ENCODE measurements at regions of chrX and their contacts with region 1.

Region 1: GRCh38 chrX:48801280-48802088 is at the start of gene HDAC6:
- DNase-seq: peak; percentile 96
- H3K4me3 Mint-ChIP-seq: peak within 1 kb of the TSS; percentile 93
- H3K27ac Mint-ChIP-seq: peak within 1 kb of the TSS; percentile 98
- H3K4me1 Mint-ChIP-seq: peaks cover 13% of the 10 kb centered on the region
- H3K27me3 Mint-ChIP-seq: no peaks in the 10 kb centered on the region
- total RNA-seq, gene HDAC6: 91.1 to 99.4 TPM

Region 2: GRCh38 chrX:48539345-48540027 is 262.0 kb before region 1 on chrX and contains the start of gene TBC1D25:
- CTCF ChIA-PET with region 1: no interaction called
- intact Hi-C with region 1: loop called (anchors 1 kb)
- DNase-seq: peak; percentile 98
- H3K4me3 Mint-ChIP-seq: peak within 1 kb of the TSS; percentile 88
- H3K27ac Mint-ChIP-seq: peak within 1 kb of the TSS; percentile 93
- H3K4me1 Mint-ChIP-seq: peaks cover 12% of the 10 kb centered on the region
- H3K27me3 Mint-ChIP-seq: no peaks in the 10 kb centered on the region
- total RNA-seq, gene TBC1D25: 10.6 to 11.1 TPM

Region 3: GRCh38 chrX:48648336-48648751 is 153.1 kb before region 1 on chrX:
- CTCF ChIA-PET with region 1: interaction called, 3 read pairs
- intact Hi-C with region 1: loop called (anchors 2 kb)
- DNase-seq: peak; percentile 53
- H3K4me3 Mint-ChIP-seq: no peak overlapping the region
- H3K27ac Mint-ChIP-seq: no peak overlapping the region
- H3K4me1 Mint-ChIP-seq: peaks cover 11% of the 10 kb centered on the region
- H3K27me3 Mint-ChIP-seq: no peaks in the 10 kb centered on the region

Region 4: GRCh38 chrX:48713847-48714246 is 87.6 kb before region 1 on chrX:
- CTCF ChIA-PET with region 1: no interaction called
- intact Hi-C with region 1: loop called (anchors 2 kb)
- DNase-seq: peak; percentile 10
- H3K4me3 Mint-ChIP-seq: peak overlapping the region; percentile 3
- H3K27ac Mint-ChIP-seq: peak overlapping the region; percentile 69
- H3K4me1 Mint-ChIP-seq: peaks cover 77% of the 10 kb centered on the region
- H3K27me3 Mint-ChIP-seq: no peaks in the 10 kb centered on the region

Region 5: GRCh38 chrX:48897621-48898306 is 96.3 kb after region 1 on chrX and contains the starts of genes PQBP1 and TIMM17B:
- CTCF ChIA-PET with region 1: interaction called, 3 read pairs
- intact Hi-C with region 1: loop called (anchors 1 kb)
- DNase-seq: peak; percentile 91
- H3K4me3 Mint-ChIP-seq: peak within 1 kb of the TSS; percentile 81
- H3K27ac Mint-ChIP-seq: peak within 1 kb of the TSS; percentile 94
- H3K4me1 Mint-ChIP-seq: peaks cover 22% of the 10 kb centered on the region
- H3K27me3 Mint-ChIP-seq: no peaks in the 10 kb centered on the region
- total RNA-seq, gene PQBP1: 86.8 to 94.5 TPM
- total RNA-seq, gene TIMM17B: 88.0 to 94.9 TPM

Region 6: GRCh38 chrX:48957827-48958634 is 156.5 kb after region 1 on chrX:
- CTCF ChIA-PET with region 1: no interaction called
- intact Hi-C with region 1: loop called (anchors 1 kb)
- DNase-seq: peak; percentile 96
- H3K4me3 Mint-ChIP-seq: peak overlapping the region; percentile 98
- H3K27ac Mint-ChIP-seq: peak overlapping the region; percentile 100
- H3K4me1 Mint-ChIP-seq: peaks cover 47% of the 10 kb centered on the region
- H3K27me3 Mint-ChIP-seq: no peaks in the 10 kb centered on the region

Region 7: DNA sequence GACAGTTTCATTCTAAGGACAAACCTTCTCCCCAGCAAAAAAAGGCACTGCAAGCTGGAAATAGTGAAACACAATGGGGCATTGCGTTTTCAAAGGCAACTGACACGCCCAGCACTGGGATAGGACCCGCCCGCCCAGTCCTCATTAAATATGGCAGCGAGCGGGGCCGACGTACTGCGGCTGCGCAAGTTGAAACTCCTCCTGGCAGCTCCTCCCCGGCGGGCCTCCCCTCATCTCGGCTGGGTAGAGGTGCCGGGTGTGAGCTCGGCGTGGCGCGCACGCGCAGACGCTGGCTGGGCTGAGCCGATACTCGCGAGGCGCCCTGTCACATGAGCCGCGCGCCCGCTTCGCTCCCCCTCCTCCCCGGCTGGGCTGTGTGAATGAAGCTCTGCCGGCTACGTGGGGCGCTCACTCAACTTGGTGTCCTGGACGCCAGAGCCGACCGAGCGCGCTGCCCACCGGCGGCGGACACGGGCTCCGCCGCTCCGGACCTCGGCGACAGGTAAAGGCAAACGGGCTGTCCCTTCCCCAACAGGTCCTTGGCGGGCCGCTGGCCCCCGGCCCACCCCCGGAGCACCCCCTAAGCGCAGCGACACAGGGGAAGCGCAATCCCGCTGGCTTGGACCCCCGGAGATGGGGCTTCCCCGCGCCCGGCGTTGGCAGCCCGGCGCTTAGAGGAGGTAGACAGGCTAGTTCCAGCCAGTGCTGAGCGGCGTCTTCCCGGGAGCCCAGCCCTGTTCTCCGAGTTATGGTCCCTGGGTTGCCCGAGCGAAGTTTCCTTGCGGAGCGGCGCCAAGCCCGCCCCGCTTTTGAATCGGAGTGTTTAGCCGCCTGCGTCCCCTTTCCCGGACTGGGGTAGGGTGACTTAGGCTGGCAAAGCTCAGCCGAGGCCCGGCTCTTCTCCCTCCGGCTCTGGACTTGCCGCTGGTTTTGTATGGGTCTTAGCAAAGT is 1121.1 kb after region 1 on chrX and contains the start of gene CLCN5:
- CTCF ChIA-PET with region 1: no interaction called
- intact Hi-C with region 1: loop called (anchors 10 kb)
- DNase-seq: peak; percentile 95
- H3K4me3 Mint-ChIP-seq: peak within 1 kb of the TSS; percentile 73
- H3K27ac Mint-ChIP-seq: peak within 1 kb of the TSS; percentile 76
- H3K4me1 Mint-ChIP-seq: peaks cover 7% of the 10 kb centered on the region
- H3K27me3 Mint-ChIP-seq: no peaks in the 10 kb centered on the region
- total RNA-seq, gene CLCN5: 2.6 to 3.6 TPM

Measured in activated naive CD4-positive, alpha-beta T cell treated with anti-CD3 and anti-CD28 coated beads for 36 hours (primary cell).